GM12878 (cell line): ENCODE measurements at regions of chr7 and their contacts with region 1.

Region 1: GRCh38 chr7:2510909-2511768 is 8.4 kb upstream of the LFNG start:
- DNase-seq: no peak
- ATAC-seq: peak; percentile 45
- H3K4me3 ChIP-seq: no peak overlapping the region
- H3K27ac ChIP-seq: peak overlapping the region; percentile 18; the same call in 1 of the 2 replicates
- H3K4me1 ChIP-seq: peaks cover 38% of the 10 kb centered on the region
- H3K27me3 ChIP-seq: no peaks in the 10 kb centered on the region
- CTCF ChIP-seq: no peak
- EP300 ChIP-seq: no peak
- POLR2A ChIP-seq: peak; percentile 54; the same call in 1 of the 2 replicates
- RAD21 ChIP-seq: no peak

Region 2: DNA sequence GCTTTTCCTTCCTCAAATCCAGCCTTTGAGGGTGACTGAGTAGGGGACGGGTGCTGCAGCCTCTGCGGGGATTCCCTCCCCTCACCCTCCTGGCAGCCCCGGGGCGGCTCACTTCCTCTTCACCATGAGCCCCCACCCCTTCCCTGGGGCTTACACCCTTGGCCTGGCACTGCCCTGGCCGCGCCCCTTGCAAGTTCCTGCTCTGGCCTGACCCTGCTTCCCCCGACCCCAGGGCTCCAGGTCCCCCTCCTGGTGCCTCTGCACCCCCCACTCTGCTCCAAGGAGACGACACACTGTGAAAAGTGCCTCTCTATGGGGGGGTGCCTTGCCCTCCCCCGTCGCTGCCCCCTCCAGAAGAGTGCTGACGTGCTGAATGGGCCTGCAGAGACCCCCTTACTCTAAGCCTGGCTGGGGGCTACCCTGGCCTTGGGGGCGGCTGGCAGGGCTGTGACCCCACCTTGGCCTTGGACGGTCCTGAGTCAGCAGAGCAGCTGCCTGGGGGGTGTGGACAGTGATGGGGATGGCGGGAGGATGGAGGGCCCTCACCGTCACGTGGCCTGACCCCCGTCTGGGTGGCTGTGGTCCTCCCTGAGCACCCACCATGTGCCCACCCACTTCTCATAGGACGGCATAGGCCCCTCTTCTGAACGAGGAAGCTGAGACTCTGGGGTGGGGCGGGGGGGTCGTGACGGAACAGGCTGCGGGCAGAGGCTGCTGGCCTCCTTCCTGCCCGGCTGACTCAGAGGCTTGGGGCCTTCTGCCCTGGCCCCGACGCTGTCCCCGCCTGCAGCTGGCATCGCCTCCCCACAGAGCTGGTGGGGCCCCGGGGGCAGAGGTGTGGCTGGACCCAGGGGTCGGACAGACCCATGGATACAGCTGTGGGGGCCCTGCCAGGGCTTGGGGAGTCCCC is 18.3 kb after region 1 on chr7:
- CTCF ChIA-PET with region 1: no interaction called
- POLR2A ChIA-PET with region 1: interaction called, 10 read pairs
- RAD21 ChIA-PET with region 1: interaction called, 5 read pairs
- SMC1A ChIA-PET with region 1: no interaction called
- in situ Hi-C with region 1: no loop called
- intact Hi-C with region 1: no loop called
- DNase-seq: no peak
- ATAC-seq: peak; percentile 72
- H3K4me3 ChIP-seq: no peak overlapping the region
- H3K27ac ChIP-seq: peak overlapping the region; percentile 61
- H3K4me1 ChIP-seq: peaks cover 29% of the 10 kb centered on the region
- H3K27me3 ChIP-seq: no peaks in the 10 kb centered on the region
- CTCF ChIP-seq: no peak
- EP300 ChIP-seq: peak in 1 of 2 experiments; percentile 34; a peak in 1 of 4 replicates
- POLR2A ChIP-seq: peak; percentile 9; the same call in 1 of the 2 replicates
- RAD21 ChIP-seq: no peak